RWPE1 (cell line): ENCODE measurements at regions of chr3 and their contacts with region 1.

Region 1: DNA sequence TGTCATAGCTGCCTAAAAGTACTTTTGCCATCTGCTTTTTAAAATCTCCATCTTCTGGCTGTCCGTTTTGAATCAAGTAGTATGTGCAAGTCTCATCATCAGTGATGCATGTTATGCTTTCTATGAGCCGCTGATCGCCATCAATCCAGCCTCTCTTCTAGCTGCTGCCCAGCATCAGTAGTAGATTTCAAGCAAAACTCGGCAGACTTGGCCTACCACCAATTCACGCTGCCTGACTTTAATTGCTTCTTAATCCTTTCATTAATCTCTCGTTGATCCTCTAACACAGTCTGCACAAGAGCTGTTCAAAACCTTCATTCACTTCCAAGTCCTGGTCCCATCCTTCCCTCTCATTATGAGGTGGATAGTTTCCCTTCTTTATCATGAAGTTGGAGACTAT is 104.9 kb downstream of the NSUN3 start:
- DNase-seq: no peak
- H3K27ac ChIP-seq: no peak overlapping the region
- CTCF ChIP-seq: no peak

Region 2: GRCh38 chr3:94118390-94118789 is 49.4 kb before region 1 on chr3:
- CTCF ChIA-PET with region 1: interaction called, 10 read pairs
- POLR2A ChIA-PET with region 1: no interaction called
- DNase-seq: no peak
- H3K27ac ChIP-seq: no peak overlapping the region
- CTCF ChIP-seq: no peak